Calu3 (cell line): ENCODE measurements at regions of chr5 and their contacts with region 1.

Region 1: DNA sequence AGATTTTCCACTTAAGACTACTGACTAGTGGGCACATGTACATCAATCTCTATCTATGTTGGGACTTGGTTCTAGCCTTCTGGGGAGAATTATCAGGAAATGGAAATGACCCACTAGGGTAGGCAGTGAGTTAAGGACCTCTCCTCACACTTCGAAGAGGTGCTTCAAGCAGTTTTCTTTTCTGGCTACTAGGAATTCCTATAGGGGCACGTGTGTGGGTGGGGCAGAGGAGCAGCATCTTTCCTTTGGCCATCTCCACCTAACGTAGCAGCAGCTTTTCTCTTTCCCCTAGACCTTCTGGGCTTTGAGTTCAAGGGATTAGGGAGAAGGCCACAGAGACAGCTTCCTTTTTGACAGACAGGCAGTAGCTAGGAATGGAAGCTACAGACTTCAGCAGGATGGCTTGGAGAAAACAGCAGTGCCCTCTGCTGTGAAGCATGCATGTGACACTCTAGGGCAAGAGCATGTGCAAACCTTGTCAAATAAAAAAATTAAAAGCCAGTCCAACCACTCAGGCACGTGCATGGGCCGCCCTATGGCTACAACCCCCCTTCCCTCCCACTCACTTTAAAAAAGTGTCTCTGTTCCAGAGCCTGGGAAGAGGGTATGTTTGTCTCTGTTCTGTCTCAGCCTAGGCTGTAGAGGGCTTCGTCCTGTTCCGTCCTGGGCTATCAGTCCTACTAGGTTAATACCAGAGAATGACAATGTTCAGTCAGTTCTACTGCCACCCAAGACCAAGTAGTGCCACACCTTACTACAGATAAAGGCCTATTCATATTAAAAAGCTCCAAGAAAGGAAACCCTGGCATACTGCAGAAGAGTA is 8.7 kb upstream of the GFRA3 start:
- DNase-seq: peak; percentile 50
- H3K4me3 Mint-ChIP-seq: no peak overlapping the region
- H3K27ac Mint-ChIP-seq: no peak overlapping the region
- H3K4me1 Mint-ChIP-seq: no peaks in the 10 kb centered on the region
- H3K27me3 Mint-ChIP-seq: peaks cover 3% of the 10 kb centered on the region
- CTCF ChIP-seq: no peak

Region 2: GRCh38 chr5:137901011-137901817 is 381.9 kb before region 1 on chr5:
- CTCF ChIA-PET with region 1: no interaction called
- intact Hi-C with region 1: no loop called
- DNase-seq: no peak
- H3K4me3 Mint-ChIP-seq: peak overlapping the region; percentile 28
- H3K27ac Mint-ChIP-seq: no peak overlapping the region
- H3K4me1 Mint-ChIP-seq: peaks cover 18% of the 10 kb centered on the region
- H3K27me3 Mint-ChIP-seq: no peaks in the 10 kb centered on the region
- CTCF ChIP-seq: no peak

Region 3: GRCh38 chr5:138213161-138214029 is 69.7 kb before region 1 on chr5 and contains the start of gene CDC23:
- CTCF ChIA-PET with region 1: interaction called, 5 read pairs
- intact Hi-C with region 1: loop called (anchors 1 kb)
- DNase-seq: peak; percentile 95
- H3K4me3 Mint-ChIP-seq: peak within 1 kb of the TSS; percentile 99
- H3K27ac Mint-ChIP-seq: peak within 1 kb of the TSS; percentile 99
- H3K4me1 Mint-ChIP-seq: peaks cover 19% of the 10 kb centered on the region
- H3K27me3 Mint-ChIP-seq: no peaks in the 10 kb centered on the region
- CTCF ChIP-seq: no peak
- total RNA-seq, gene CDC23: 45.8 and 46.9 TPM in 2 replicates

Region 4: DNA sequence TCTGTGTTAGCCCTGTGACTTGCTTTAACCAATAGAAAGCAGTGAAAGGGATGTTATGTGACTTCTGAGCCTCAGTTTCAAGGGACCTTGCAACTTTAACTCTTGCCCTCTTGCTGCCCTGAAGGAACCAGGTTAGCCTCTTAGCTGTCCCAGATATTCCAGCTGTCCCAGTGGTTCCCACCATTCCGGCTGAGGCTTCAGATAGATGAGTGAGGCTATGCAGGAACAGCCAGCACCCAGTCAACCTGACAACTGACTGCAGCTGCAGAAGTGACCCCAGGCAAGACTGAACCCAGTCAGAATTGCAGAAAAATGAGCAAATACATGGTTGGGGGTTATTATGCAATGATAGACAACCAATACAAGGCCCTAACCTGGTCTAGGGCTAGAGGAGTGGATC is 59.6 kb before region 1 on chr5:
- CTCF ChIA-PET with region 1: interaction called, 10 read pairs
- intact Hi-C with region 1: loop called (anchors 1 kb)
- DNase-seq: no peak
- H3K4me3 Mint-ChIP-seq: no peak overlapping the region
- H3K27ac Mint-ChIP-seq: no peak overlapping the region
- H3K4me1 Mint-ChIP-seq: peaks cover 8% of the 10 kb centered on the region
- H3K27me3 Mint-ChIP-seq: no peaks in the 10 kb centered on the region
- CTCF ChIP-seq: no peak

Region 5: DNA sequence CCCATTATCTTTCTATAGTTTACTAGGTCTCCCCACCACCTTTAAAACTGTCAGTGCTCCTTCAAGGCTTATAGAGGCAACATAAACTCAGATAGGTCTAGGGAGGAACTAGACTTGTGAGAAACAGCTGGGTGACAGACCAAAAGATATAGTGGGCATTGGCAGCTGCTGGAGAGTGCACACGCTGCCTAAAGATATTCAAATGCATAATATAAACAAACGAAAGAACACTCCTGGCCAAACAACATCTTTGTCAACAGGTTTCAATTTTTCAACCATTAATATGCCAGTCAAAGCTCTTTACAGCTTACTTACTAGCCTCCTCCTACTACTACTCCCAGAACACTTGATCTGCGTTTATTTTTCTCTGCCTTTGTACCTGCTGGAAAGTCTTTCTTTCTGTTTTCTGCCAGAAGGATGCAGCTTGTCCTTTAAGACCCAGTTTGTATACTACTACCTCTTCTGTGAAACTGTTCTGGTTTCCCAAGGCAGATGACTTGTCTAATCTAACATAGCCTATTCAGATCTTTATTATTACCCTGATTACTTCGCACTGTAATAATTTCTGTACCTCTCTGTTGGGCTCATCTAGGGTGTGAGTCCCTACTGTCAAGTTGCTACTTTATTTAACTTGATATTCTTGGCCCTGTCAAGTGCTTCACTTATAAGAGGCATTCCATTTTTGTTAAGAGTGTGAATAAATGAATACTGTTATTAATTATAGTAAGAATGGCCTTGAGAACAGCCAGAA is 83.7 kb after region 1 on chr5:
- CTCF ChIA-PET with region 1: no interaction called
- intact Hi-C with region 1: no loop called
- DNase-seq: no peak
- H3K4me3 Mint-ChIP-seq: no peak overlapping the region
- H3K27ac Mint-ChIP-seq: no peak overlapping the region
- H3K4me1 Mint-ChIP-seq: no peaks in the 10 kb centered on the region
- H3K27me3 Mint-ChIP-seq: no peaks in the 10 kb centered on the region
- CTCF ChIP-seq: no peak